ENCODE measurements at regions of chr7 and their contacts with region 1.

Region 1: GRCh38 chr7:41277561-41277960 is 425.3 kb downstream of the INHBA start:
- DNase-seq: no peak
- ATAC-seq: no peak
- H3K4me3 ChIP-seq: no peak overlapping the region
- H3K27ac ChIP-seq: no peak overlapping the region
- H3K4me1 ChIP-seq: no peaks in the 10 kb centered on the region
- H3K27me3 ChIP-seq: no peaks in the 10 kb centered on the region
- CTCF ChIP-seq: no peak
- EP300 ChIP-seq: no peak
- POLR2A ChIP-seq: no peak
- RAD21 ChIP-seq: no peak

Region 2: DNA sequence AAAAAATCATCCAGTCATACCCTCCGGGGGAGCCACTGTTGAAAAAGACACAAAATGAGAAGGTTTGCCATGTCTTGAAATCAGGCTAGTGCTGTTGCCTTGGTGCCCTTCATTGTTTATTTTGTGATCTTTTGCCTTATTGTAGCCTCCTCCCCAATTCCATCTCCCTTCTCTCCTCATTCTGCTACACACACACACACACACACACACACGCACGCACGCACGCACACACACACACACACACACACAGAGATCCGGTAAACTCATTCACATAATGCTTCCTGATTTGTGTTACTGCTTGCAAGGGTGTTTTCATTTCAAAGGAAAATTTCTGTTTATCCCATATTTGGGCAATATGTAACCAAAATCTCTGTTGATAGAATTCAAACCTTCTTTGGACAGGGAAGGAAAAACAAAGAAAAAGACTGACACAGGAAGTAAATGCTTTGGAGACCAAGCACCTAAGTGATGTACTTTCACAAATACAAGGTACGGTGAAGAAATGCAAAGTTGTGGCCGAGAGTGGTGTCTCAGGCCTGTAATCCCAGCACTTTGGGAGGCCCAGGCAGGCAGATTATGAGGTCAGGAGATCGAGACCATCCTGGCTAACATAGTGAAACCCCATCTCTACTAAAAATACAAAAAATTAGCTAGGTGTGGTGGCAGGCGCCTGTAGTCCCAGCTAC is 1468.6 kb before region 1 on chr7:
- CTCF ChIA-PET with region 1: no interaction called
- POLR2A ChIA-PET with region 1: no interaction called
- in situ Hi-C with region 1: no loop called
- intact Hi-C with region 1: no loop called
- DNase-seq: no peak
- ATAC-seq: no peak
- H3K4me3 ChIP-seq: no peak overlapping the region
- H3K27ac ChIP-seq: no peak overlapping the region
- H3K4me1 ChIP-seq: no peaks in the 10 kb centered on the region
- H3K27me3 ChIP-seq: 0 out of 5 replicates have a peak, but pooled peaks cover 0 to 4% of the 10 kb centered on the region in 2 experiments
- CTCF ChIP-seq: no peak
- EP300 ChIP-seq: no peak
- POLR2A ChIP-seq: no peak
- RAD21 ChIP-seq: no peak

Region 3: DNA sequence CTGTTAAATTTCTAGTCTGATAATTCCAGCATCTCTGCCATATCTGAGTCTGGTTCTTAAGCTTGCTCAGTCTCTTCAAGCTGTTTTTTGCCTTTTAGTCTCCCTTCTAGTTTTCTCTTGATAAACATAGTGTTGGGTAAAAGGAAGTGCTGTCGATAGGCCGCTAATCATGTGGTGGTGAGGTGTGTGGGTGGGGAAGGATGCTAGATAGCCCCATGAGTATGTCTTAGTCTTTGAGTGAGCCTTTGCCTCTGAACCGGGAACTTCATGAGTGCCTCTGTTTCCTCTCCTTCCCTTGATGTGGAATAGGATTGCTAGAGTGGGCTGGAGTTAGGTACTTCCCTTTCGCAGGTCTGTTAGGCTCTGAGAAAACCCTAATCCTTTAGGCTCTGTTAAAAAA is 16.5 kb before region 1 on chr7:
- CTCF ChIA-PET with region 1: no interaction called
- POLR2A ChIA-PET with region 1: no interaction called
- in situ Hi-C with region 1: no loop called
- intact Hi-C with region 1: loop called (anchors 1 kb)
- DNase-seq: no peak
- ATAC-seq: no peak
- H3K4me3 ChIP-seq: no peak overlapping the region
- H3K27ac ChIP-seq: no peak overlapping the region
- H3K4me1 ChIP-seq: no peaks in the 10 kb centered on the region
- H3K27me3 ChIP-seq: no peaks in the 10 kb centered on the region
- CTCF ChIP-seq: no peak
- EP300 ChIP-seq: no peak
- POLR2A ChIP-seq: no peak
- RAD21 ChIP-seq: no peak

Measured in HepG2 (cell line).